Sciatic nerve (tissue), 2 donors: ENCODE measurements at regions of chrX and their contacts with region 1.

Region 1: GRCh38 chrX:7351926-7352325 is 204.0 kb upstream of the PUDP start:
- DNase-seq: no peak
- ATAC-seq: no peak

Region 2: GRCh38 chrX:7390441-7390840 is 38.5 kb after region 1 on chrX:
- intact Hi-C with region 1: loop called (anchors 2 kb)
- DNase-seq: no peak
- ATAC-seq: no peak